Natural killer cell (primary cell): ENCODE measurements at regions of chr20 and their contacts with region 1.

Region 1: DNA sequence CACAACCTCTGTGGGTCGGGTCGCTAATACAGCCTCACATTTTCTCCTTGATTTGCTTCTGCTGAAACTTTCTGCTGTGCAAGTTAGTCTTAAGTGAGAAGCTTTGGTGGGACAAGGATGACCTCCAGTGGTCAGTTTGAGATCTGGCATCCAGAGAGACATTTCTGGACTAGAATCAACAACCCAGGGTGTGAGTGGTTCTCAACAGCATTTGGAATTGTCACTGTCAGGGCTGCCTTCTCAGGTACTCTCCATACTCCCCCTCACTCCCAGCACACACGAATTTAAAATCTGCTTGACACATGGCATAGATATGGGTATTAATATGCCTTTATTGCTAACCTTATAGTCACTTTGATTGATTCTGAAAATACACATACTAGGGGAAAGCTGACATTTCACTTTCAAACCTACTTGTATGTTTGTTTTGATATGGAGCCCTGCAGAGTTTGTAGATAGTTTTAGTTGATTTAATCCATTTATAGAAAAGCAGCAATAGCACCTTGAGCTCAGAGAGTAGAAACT is 13.2 kb downstream of the OTOR start:
- DNase-seq: peak; percentile 18 to 80
- ATAC-seq: peak; percentile 57 to 68 (median 62)
- H3K4me3 ChIP-seq: no peak overlapping the region
- H3K4me3 Mint-ChIP-seq: no peak overlapping the region
- H3K27ac ChIP-seq: no peak overlapping the region
- H3K27ac Mint-ChIP-seq: no peak overlapping the region
- H3K4me1 ChIP-seq: no peaks in the 10 kb centered on the region
- H3K4me1 Mint-ChIP-seq: no peaks in the 10 kb centered on the region
- H3K27me3 ChIP-seq: no peaks in the 10 kb centered on the region
- H3K27me3 Mint-ChIP-seq: peaks cover 28 to 53% of the 10 kb centered on the region in 2 donors
- CTCF ChIP-seq: peak; percentile 64

Region 2: DNA sequence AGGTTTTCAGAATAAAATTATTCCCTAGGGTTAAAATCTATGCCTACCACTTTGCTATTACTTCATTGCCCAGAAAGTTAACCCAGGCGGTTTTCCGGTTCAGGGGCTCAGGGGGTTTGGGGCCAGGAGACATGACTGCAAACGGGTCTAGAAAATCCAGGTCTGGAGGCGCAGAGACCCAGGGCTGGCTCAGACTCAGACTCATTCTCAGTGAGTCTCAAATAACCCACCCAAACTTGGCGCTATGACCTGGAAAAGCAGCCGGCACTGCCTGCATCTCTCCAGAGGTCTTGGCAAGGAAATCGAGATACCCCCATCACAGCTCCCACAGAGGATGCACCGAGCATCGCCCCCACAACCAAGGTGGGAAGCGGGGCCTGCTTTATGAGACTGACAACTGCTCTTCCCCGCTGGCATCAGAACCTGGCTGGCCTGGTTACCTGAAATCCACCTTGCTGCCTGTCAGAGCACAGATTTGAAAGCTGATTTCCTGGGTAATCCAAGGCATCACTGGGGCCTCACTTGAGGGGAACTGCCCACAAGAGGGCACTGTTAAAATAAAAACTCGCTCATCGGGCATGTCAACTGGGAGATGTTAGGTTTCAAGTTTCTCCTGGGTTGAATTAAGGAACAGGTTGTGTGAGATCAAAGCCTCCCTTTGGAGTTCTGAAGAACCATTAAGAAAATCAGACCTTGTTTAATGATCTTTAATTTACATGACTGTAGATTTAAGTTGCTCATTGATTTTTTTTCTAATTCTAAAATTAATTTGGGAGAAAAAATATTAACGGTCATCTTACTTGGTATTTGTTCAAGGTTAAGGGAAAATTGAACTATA is 243.2 kb before region 1 on chr20:
- intact Hi-C with region 1: loop called (anchors 5 kb)
- DNase-seq: peak in 1 of 2 donors; percentile 35
- ATAC-seq: no peak
- H3K4me3 ChIP-seq: no peak overlapping the region
- H3K4me3 Mint-ChIP-seq: no peak overlapping the region
- H3K27ac ChIP-seq: no peak overlapping the region
- H3K27ac Mint-ChIP-seq: no peak overlapping the region
- H3K4me1 ChIP-seq: no peaks in the 10 kb centered on the region
- H3K4me1 Mint-ChIP-seq: peaks cover 0 to 9% of the 10 kb centered on the region in 2 donors
- H3K27me3 ChIP-seq: no peaks in the 10 kb centered on the region
- H3K27me3 Mint-ChIP-seq: no peaks in the 10 kb centered on the region
- CTCF ChIP-seq: peak; percentile 16

Region 3: DNA sequence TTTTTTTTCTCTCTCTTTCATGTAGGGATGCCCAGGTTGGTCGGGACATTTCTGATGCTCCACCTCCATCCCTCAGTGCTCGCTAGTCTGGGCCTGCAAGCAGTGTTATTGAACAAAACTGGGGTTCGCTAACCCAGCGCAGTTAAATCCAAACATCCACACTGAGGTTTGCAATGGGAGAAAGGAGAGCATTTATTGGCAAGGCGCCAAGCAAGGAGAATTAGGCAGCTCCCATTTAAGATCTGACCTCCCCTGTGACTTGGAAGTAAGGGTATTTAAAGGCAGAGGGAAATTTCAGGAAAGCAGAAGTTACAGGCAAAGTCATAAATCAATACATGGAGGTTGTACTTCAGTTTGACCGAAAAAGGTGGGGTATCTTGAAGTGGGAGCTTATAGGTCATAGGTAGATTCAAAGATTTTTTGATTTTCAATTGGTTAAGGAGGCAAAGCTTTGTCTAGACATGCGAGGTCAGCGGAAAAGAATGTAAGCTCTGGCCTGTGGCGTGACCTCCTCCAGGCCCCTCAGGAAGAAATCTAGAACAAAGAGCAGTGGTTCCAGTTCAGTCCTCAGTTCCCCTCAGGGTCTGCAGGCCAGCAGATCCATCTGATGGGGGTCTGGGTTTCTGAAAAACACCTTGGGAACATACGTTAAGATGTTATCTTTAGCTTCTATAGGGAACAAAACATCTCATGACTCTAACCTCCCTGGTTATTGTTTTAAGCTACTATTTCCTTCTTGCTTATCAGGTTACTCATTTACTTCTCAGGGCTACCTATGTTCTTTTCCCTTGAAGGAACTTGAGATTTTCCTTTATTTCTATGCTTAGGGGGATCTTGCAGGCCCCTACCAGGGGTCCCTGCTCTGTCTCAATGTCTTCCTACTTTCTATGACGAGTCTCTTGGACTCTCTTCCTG is 122.1 kb before region 1 on chr20:
- intact Hi-C with region 1: no loop called
- DNase-seq: no peak
- ATAC-seq: no peak
- H3K4me3 ChIP-seq: no peak overlapping the region
- H3K4me3 Mint-ChIP-seq: no peak overlapping the region
- H3K27ac ChIP-seq: no peak overlapping the region
- H3K27ac Mint-ChIP-seq: no peak overlapping the region
- H3K4me1 ChIP-seq: no peaks in the 10 kb centered on the region
- H3K4me1 Mint-ChIP-seq: no peaks in the 10 kb centered on the region
- H3K27me3 ChIP-seq: no peaks in the 10 kb centered on the region
- H3K27me3 Mint-ChIP-seq: peaks cover 9 to 15% of the 10 kb centered on the region in 2 donors
- CTCF ChIP-seq: no peak

Region 4: GRCh38 chr20:16701296-16701695 is 60.1 kb before region 1 on chr20:
- intact Hi-C with region 1: loop called (anchors 1 kb)
- DNase-seq: peak in 1 of 2 donors; percentile 66
- ATAC-seq: peak in 2 of 3 donors; percentile 62 to 69
- H3K4me3 ChIP-seq: no peak overlapping the region
- H3K4me3 Mint-ChIP-seq: no peak overlapping the region
- H3K27ac ChIP-seq: no peak overlapping the region
- H3K27ac Mint-ChIP-seq: no peak overlapping the region
- H3K4me1 ChIP-seq: no peaks in the 10 kb centered on the region
- H3K4me1 Mint-ChIP-seq: no peaks in the 10 kb centered on the region
- H3K27me3 ChIP-seq: no peaks in the 10 kb centered on the region
- H3K27me3 Mint-ChIP-seq: peaks cover 22 to 48% of the 10 kb centered on the region in 2 donors
- CTCF ChIP-seq: peak; percentile 18